Activated T-helper 1 cell treated with anti-CD3 and anti-CD28 coated beads, Interleukin-12 subunit alpha, Interleukin-12 subunit beta, Interleukin-2, Interleukin-4 antibody, amounts not matched to agents 30 ng/mL and 10 ng/mL and 1 ng/mL, durations not matched to agents 14 hours and 24 hours and 36 hours (primary cell): ENCODE measurements at regions of chr6 and their contacts with region 1.

Region 1: GRCh38 chr6:157861814-157862213 is 38.8 kb downstream of the SNX9 start:
- DNase-seq: no peak
- H3K4me3 Mint-ChIP-seq: no peak overlapping the region
- H3K27ac Mint-ChIP-seq: no peak overlapping the region
- H3K4me1 Mint-ChIP-seq: peaks cover 52% of the 10 kb centered on the region
- H3K27me3 Mint-ChIP-seq: peaks cover 13% of the 10 kb centered on the region

Region 2: DNA sequence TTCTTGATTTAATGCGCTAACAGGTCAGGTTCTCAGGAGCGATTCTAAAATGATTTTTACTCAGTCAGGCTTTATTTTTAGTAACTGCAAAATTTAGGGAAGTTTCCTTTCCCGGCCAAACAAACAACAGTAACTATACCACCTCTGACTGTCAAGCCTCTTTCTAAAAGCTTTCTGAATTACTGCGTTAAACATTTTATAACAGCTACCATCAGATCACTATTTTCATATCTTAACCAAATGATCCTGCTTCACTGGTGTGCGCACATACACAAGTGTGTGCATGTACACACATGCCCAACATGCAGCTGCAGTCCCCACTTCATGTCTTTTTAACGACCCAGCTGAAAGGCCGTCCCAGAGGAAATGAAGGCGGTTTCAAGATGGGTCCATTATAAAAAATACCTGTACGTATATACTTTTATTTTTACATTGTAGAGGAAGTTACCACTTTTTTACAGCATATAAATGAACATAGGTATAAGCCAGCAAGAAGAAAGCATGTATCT is 563.5 kb before region 1 on chr6:
- intact Hi-C with region 1: no loop called
- DNase-seq: no peak
- H3K4me3 Mint-ChIP-seq: no peak overlapping the region
- H3K27ac Mint-ChIP-seq: no peak overlapping the region
- H3K4me1 Mint-ChIP-seq: peaks cover 7% of the 10 kb centered on the region
- H3K27me3 Mint-ChIP-seq: no peaks in the 10 kb centered on the region

Region 3: DNA sequence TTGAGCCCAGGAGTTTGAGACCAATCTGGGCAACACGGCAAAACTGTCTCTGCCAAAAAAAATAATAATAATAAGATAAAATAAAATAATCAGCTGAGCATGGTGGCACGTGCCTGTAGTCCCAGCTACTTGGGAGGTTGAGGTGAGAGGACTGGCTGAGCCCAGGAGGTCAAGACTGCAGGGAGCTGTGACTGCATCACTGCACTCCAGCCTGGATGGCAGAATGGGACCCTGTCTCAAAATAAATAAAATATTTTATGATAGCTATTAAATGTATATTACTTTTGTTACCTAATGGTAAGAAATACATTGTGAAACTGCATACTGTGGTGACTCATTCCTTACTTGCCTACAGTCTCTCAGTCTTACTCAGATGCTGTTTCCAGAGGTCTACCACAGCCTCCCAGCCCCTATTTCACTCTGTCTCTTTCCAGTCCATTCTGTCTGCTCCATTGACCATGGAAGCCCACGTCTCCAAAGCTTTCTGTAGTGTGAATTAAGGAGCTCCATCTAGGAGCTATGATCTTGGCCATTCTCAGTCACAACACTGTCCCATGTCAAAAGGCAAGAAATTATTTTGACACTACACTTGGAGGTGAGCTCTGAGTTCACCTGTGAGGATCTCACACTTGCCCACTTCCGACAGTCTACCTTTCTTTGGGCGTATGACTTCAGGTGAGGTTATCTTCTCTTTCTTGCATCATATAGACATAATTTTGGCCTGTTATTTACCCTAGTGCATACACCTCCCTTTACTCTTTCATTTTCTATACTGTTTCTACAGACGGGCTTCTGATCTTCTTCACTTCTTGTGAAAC is 61.2 kb before region 1 on chr6:
- intact Hi-C with region 1: loop called (anchors 1 kb)
- DNase-seq: peak; percentile 29
- H3K4me3 Mint-ChIP-seq: peak overlapping the region; percentile 45
- H3K27ac Mint-ChIP-seq: peak overlapping the region; percentile 84
- H3K4me1 Mint-ChIP-seq: peaks cover 62% of the 10 kb centered on the region
- H3K27me3 Mint-ChIP-seq: peaks cover 34% of the 10 kb centered on the region

Region 4: GRCh38 chr6:157830354-157831017 is 31.3 kb before region 1 on chr6:
- intact Hi-C with region 1: loop called (anchors 1 kb)
- DNase-seq: no peak
- H3K4me3 Mint-ChIP-seq: no peak overlapping the region
- H3K27ac Mint-ChIP-seq: peak overlapping the region; percentile 45
- H3K4me1 Mint-ChIP-seq: peaks cover 67% of the 10 kb centered on the region
- H3K27me3 Mint-ChIP-seq: no peaks in the 10 kb centered on the region

Region 5: DNA sequence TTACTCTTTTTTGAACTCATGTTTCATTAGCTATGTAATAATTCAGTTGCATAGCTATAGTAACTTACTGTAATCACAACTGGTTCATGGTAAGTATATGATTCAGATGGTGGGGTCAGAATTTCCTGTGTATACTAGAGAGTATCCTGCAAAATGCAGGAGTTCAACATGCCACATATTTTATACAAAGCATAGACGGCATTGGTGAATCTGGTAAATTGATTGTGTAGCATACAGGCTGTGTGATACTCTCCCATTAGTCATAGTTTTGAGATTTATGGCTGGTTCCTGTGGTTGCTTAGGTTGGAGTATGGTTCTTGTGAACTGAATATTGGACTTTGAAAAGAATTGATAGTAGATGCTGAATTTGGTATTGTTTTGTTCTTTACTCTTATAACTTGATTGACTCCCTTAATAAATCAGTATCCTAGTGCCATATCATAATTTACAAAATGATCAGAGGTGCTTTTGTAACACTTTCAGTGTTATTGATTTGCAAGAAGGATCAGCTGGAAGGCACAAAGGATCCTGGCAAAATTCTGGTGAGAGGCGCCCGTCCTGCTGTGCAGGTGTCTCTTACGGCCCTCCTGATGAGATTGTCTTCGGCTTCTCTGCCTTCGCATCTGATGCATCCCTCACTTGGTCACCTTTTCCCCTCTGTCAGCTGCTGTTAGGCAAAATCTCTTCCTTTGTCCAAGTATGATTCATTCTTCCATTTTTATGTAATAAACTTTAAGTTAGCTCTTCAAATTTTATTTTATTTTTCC is 16.1 kb before region 1 on chr6:
- intact Hi-C with region 1: loop called (anchors 2 kb)
- DNase-seq: no peak
- H3K4me3 Mint-ChIP-seq: no peak overlapping the region
- H3K27ac Mint-ChIP-seq: no peak overlapping the region
- H3K4me1 Mint-ChIP-seq: peaks cover 57% of the 10 kb centered on the region
- H3K27me3 Mint-ChIP-seq: no peaks in the 10 kb centered on the region

Region 6: GRCh38 chr6:157885211-157885788 is 23.5 kb after region 1 on chr6:
- intact Hi-C with region 1: no loop called
- DNase-seq: peak; percentile 60
- H3K4me3 Mint-ChIP-seq: peak overlapping the region; percentile 45
- H3K27ac Mint-ChIP-seq: peak overlapping the region; percentile 88
- H3K4me1 Mint-ChIP-seq: peaks cover 79% of the 10 kb centered on the region
- H3K27me3 Mint-ChIP-seq: no peaks in the 10 kb centered on the region

Region 7: GRCh38 chr6:159493898-159494585 is 1632.2 kb after region 1 on chr6:
- intact Hi-C with region 1: no loop called
- DNase-seq: no peak
- H3K4me3 Mint-ChIP-seq: no peak overlapping the region
- H3K27ac Mint-ChIP-seq: no peak overlapping the region
- H3K4me1 Mint-ChIP-seq: no peaks in the 10 kb centered on the region
- H3K27me3 Mint-ChIP-seq: peaks cover 6% of the 10 kb centered on the region